ENCODE measurements at regions of chr7 and their contacts with region 1.

Region 1: GRCh38 chr7:44606450-44607254 is at the start of gene OGDH:
- DNase-seq: peak; percentile 100
- H3K4me3 Mint-ChIP-seq: peak within 1 kb of the TSS; percentile 99
- H3K27ac Mint-ChIP-seq: peak within 1 kb of the TSS; percentile 100
- H3K4me1 Mint-ChIP-seq: peaks cover 30% of the 10 kb centered on the region
- H3K27me3 Mint-ChIP-seq: peaks cover 11% of the 10 kb centered on the region
- total RNA-seq, gene OGDH: 99.5 and 102 TPM in 2 replicates

Region 2: DNA sequence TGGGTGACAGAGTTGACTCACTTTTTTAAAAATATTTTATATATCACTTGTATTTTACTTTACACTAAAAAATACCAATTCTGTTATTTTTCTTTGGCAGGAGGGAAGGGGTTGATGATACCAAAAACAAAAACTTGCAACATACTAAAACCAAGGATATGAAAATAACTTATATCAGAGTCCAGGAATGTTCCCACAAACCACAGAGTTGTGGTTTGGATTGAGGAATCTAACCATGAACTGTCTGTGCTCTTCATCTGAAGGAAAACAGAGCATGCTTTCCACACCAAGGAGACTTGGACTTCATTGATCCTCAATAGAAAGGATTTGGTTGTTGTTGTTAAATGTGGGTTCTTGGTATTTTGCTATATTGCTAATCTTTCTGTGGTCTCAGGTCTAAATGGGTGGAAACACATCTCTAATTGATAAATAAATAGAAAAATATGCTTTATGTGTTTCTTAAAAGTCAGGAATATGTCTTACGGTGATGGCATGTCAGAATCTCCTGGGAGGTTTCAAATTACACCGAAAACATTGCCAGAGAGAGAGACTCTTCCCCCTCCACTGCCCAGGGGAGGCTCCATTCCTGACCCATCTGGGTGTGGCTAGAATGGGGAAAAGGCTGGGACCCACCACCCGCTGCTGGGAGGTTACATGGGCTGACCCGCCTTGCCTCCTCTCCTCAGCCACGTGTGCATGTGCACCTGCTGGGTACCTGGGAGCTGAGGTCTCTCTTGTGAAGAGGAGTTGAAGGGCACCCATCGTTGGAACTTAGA is 1070.7 kb before region 1 on chr7:
- intact Hi-C with region 1: no loop called
- DNase-seq: no peak
- H3K4me3 Mint-ChIP-seq: no peak overlapping the region
- H3K27ac Mint-ChIP-seq: no peak overlapping the region
- H3K4me1 Mint-ChIP-seq: no peaks in the 10 kb centered on the region
- H3K27me3 Mint-ChIP-seq: peaks cover 14% of the 10 kb centered on the region

Region 3: GRCh38 chr7:43868181-43868580 is 738.5 kb before region 1 on chr7:
- intact Hi-C with region 1: no loop called
- DNase-seq: no peak
- H3K4me3 Mint-ChIP-seq: peak overlapping the region; percentile 95
- H3K27ac Mint-ChIP-seq: no peak overlapping the region
- H3K4me1 Mint-ChIP-seq: peaks cover 18% of the 10 kb centered on the region
- H3K27me3 Mint-ChIP-seq: peaks cover 4% of the 10 kb centered on the region

Region 4: DNA sequence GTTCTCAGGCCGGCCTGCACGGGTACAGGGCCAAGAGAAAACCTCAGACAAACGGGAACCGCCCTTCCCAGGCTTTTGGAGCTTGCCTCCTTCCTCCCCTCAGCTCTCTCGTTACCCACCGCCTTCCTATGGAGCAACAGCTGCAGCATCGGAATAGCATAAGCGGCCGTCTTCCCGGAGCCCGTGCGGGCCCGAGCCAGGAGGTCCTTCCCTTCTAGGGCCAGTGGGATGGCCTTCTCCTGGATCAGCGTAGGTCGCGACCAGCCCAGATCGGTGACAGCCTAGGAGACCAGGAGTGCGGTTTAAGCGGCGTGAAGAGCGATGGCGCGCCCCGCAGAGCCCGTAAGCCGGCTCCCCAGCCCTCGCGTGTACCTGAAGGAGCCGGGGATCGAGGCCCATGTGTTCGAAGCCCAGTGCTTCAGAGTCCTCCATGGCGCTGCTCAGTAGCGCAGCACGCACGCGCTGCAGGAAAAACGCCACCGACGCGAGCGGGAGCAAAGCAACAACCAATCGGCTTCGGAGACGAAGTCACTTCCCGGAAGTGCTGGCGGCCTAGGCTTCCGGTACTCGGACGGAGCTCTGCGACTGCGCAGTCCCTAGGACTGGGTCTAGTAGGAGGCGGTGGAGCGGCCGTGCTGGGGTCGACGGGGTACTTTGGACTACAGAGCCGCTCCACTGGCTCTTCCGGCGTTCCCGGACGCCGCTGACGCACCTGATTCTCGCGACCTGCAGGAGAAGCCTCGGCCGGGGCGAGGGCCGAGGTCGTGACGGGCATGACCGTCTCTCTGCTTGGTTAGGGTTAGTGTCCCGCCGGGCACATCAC is 33.0 kb before region 1 on chr7 and contains the start of gene DDX56:
- intact Hi-C with region 1: loop called (anchors 2 kb)
- DNase-seq: peak; percentile 98
- H3K4me3 Mint-ChIP-seq: peak within 1 kb of the TSS; percentile 92
- H3K27ac Mint-ChIP-seq: peak within 1 kb of the TSS; percentile 96
- H3K4me1 Mint-ChIP-seq: peaks cover 30% of the 10 kb centered on the region
- H3K27me3 Mint-ChIP-seq: no peaks in the 10 kb centered on the region
- total RNA-seq, gene DDX56: 162 and 172 TPM in 2 replicates

Region 5: GRCh38 chr7:44617225-44617890 is 10.7 kb after region 1 on chr7:
- intact Hi-C with region 1: loop called (anchors 1 kb)
- DNase-seq: no peak
- H3K4me3 Mint-ChIP-seq: peak overlapping the region; percentile 70
- H3K27ac Mint-ChIP-seq: peak overlapping the region; percentile 92
- H3K4me1 Mint-ChIP-seq: peaks cover 62% of the 10 kb centered on the region
- H3K27me3 Mint-ChIP-seq: no peaks in the 10 kb centered on the region

Region 6: DNA sequence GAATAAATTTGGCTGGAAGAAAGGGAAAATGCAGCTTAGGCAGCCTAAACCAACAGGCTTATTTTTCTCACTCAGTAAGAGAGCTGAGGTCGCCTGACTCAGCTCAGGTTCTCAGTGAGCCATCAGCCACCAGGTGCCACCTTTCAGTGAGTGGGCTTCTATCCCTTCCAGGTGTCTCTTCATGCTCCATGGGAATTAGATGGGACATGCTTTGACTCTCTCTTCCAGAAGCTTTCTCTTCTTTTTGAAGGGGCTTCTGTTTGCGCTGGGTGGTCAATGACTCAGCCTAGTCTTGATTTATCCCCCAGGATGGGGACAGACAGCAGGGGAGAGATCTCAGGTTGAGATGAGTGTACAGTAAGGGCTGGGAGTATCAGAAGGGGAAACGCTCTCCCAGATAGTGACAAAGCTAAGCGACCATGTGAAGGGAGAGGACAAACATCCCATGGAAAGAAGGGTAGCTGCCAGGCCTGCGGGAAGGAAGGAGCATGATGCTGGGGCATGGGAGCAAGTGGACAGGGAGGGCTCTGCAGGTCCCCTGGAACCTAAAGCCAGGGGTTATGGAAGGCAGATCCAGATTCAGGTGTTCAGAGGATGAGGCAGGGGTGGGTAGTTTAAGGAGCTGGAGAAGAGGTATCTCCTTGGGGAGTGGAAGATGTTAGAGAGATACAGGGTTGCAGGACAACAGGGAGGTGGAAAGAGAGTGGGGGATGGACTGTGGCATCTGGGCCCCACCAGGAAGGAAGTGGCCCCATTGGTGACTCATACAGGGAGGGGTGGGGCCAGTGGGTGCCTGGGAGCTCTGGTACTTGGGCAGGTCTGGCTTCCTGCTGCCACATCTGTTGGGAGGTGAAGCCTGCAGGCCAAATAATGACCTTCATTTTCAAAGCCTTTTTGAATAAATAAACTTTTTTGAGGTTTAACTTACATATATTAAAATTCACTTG is 32.2 kb after region 1 on chr7:
- intact Hi-C with region 1: loop called (anchors 1 kb)
- DNase-seq: peak; percentile 95
- H3K4me3 Mint-ChIP-seq: peak overlapping the region; percentile 82
- H3K27ac Mint-ChIP-seq: peak overlapping the region; percentile 99
- H3K4me1 Mint-ChIP-seq: peaks cover 66% of the 10 kb centered on the region
- H3K27me3 Mint-ChIP-seq: no peaks in the 10 kb centered on the region

Region 7: GRCh38 chr7:44797329-44798251 is 190.9 kb after region 1 on chr7:
- intact Hi-C with region 1: loop called (anchors 1 kb)
- DNase-seq: peak; percentile 95
- H3K4me3 Mint-ChIP-seq: peak overlapping the region; percentile 98
- H3K27ac Mint-ChIP-seq: peak overlapping the region; percentile 97
- H3K4me1 Mint-ChIP-seq: peaks cover 31% of the 10 kb centered on the region
- H3K27me3 Mint-ChIP-seq: no peaks in the 10 kb centered on the region

Region 8: DNA sequence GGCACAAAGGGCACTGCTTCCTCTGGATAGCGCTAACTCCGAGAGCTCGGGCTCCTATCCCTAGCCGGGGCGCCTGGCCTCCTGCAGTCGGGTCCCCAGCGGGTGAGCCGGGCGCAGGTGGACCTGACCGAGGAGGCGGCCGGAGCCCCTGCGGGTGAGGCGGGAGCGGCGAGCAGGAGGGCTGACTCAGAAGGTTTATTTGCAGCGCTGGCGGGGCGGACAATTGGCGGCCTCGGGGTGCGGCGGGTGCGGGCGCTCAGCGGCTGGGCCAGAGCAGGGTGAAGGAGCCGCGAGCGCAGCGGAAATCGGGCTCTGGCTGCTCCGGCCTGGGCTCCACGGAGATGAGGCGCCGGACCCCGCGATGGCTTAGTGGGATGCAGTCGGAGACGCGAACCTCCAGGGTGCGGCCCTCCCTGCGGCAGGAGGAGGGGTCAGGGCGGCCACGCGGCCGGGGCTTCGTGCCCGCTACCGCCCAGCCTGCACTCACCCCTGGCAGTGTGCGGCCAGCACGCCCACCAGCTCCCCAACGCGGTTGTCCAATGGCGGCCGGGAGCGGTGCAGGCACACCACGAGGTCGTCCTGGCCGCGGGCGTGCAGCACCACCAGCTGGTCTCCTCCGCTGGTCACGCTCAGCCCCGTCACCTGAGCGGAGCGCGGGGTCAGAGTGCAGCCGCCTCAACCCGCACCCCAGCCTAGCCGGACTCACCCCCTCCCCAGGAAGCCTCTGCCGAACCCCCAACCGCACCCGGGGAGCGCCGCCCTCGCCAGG is 356.0 kb after region 1 on chr7:
- intact Hi-C with region 1: no loop called
- DNase-seq: peak; percentile 67
- H3K4me3 Mint-ChIP-seq: no peak overlapping the region
- H3K27ac Mint-ChIP-seq: no peak overlapping the region
- H3K4me1 Mint-ChIP-seq: peaks cover 15% of the 10 kb centered on the region
- H3K27me3 Mint-ChIP-seq: no peaks in the 10 kb centered on the region

Region 9: DNA sequence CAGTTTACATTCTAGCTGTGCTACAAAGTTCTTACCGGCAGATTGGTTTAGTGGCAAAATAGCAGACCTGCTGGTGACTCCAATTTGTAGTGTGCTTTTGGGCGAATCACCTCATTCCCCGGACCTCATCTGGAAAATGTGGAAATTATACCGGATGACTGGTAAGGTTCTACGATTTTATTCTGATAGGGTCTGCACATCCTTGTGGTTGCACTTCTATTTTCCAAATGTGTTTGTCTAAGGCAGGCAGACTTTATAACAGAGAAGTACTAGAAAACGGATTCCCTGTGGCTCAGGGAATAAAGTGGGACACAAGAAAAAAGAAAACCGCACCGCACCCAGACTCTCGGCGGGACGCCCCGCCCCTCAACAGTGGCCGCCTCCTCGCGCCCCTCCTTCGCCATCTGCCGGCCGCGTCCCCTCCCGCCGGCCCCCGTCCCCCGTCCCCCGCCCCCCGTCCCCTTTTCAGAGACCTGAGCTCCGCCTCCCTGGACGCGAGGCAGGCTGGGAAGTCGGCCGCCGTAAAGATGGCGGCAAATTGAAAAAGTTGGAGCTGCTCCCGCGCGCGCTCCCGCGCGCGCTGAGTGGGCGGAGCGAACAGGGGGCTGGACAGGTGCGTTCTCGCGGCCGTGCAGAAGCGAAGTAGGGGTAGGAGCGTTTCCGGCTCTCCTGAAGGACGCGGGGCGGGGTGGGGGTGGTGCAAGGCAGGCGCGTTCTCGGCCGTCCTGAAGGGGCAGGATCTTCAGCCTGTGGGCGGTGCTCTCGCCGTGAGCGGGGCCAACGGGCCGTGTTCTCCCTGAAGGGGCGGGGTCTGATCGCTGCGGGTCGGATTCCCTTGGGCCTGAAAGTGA is 392.8 kb after region 1 on chr7:
- intact Hi-C with region 1: loop called (anchors 2 kb)
- DNase-seq: peak; percentile 100
- H3K4me3 Mint-ChIP-seq: peak overlapping the region; percentile 87
- H3K27ac Mint-ChIP-seq: peak overlapping the region; percentile 97
- H3K4me1 Mint-ChIP-seq: peaks cover 53% of the 10 kb centered on the region
- H3K27me3 Mint-ChIP-seq: peaks cover 3% of the 10 kb centered on the region